GM13977 (cell line): ENCODE measurements at regions of chr12 and their contacts with region 1.

Region 1: GRCh38 chr12:131434208-131435125 is 276.4 kb upstream of the SFSWAP start:
- DNase-seq: no peak
- CTCF ChIP-seq: no peak

Region 2: DNA sequence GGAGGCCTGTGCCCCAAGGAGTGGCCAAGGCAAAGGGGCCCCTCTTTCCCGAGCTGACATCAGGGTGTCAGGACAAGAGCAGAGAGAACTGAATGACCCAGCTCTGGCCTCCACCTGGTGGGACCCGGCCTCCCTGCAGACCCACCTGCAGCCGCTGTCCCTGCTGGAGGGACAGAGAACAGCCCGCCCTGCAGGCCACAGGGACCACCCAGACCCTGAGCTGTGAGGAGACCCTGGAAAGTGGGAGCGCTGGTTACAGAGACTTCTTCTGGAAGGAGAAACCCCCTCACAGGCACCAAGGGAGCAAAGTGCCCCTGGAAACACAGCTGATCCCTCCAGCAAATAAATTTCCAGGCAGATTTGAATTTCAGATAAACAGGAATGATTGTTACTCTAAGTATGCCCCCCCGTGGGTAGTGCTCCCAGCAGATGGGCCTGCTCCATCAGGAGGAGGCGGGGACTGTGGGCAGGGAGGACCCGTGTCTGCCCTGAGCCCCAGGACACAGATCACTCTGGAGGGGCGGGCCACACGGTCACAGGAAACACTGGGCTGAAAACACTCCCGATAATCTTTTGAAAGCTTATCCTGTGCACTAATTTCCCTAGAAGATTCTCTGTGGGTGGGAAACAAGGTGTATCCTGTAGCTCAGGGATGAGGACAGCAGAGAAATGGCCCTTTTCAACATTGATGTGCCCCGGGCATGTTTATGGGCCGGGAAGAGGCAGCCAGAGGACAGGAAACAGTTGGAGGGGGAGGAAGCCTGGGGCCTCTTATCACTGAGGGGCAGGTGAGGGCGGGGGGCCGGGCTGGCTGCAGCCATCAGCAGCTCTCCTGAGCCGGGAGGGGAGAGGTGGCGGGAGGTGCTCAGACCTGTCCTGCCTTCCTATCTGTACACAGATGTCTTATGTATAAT is 204.8 kb before region 1 on chr12:
- in situ Hi-C with region 1: loop called (anchors 5 kb)
- DNase-seq: no peak
- CTCF ChIP-seq: no peak

Region 3: GRCh38 chr12:131345521-131346436 is 88.7 kb before region 1 on chr12:
- in situ Hi-C with region 1: no loop called
- DNase-seq: no peak
- CTCF ChIP-seq: no peak

Region 4: GRCh38 chr12:131559517-131560516 is 125.3 kb after region 1 on chr12:
- in situ Hi-C with region 1: no loop called
- DNase-seq: no peak
- CTCF ChIP-seq: no peak